ENCODE measurements at regions of chr2 and their contacts with region 1.

Region 1: DNA sequence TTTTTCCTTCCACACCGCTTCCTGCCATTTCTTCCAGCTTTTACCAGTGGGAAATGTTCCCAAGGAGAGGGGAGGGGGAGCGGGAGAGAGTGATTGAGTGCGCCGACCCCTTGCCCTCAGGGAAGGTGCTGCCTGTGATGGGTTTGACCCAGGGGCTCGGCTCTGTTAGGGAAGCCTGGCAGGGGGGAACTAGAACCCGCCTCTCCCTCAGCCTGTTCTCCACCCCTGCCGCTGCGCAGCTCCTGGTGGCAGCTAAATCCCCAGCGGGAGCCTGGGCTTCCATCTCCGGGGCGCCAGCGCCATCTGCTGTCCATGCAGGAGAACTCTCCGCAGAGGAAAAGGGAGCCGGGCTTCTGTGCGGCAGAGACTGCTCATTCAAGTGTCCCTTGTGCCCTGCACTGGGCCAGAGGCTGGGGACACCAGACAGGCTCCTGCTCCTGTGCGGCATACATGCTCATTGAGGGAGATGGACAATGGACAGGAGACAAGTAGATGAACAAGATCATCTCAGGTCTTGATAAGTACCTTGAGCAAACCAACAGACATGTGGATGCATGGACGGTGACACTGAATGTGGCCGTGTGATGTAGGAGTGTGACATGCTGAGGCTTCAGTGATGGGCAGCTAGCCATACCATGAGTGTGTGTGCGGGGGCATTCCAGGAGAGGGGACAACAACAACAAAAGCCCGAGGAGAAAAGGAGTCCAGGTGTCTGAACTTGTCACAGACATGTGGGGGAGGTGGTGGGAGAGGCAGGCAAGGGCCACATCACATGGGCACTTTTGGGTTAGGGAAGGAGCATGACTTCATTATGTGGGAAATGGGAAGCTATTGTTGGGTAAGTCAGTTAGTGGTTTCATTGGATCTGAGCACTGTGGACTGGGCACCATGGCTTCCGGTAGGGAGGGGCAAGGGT is 13.3 kb downstream of the CHPF start:
- DNase-seq: peak; percentile 86 to 96 (median 90)
- ATAC-seq: peak; percentile 77 to 83
- H3K4me3 ChIP-seq: no peak overlapping the region
- H3K27ac ChIP-seq: no peak overlapping the region
- H3K4me1 ChIP-seq: peaks cover 2% of the 10 kb centered on the region
- H3K27me3 ChIP-seq: no peaks in the 10 kb centered on the region

Region 2: GRCh38 chr2:219402665-219403515 is 127.4 kb before region 1 on chr2:
- intact Hi-C with region 1: loop called (anchors 2 to 5 kb)
- DNase-seq: peak; percentile 69 to 80 (median 70)
- ATAC-seq: peak; percentile 36 to 58
- H3K4me3 ChIP-seq: no peak overlapping the region
- H3K27ac ChIP-seq: no peak overlapping the region
- H3K4me1 ChIP-seq: peaks cover 3% of the 10 kb centered on the region
- H3K27me3 ChIP-seq: no peaks in the 10 kb centered on the region

Region 3: DNA sequence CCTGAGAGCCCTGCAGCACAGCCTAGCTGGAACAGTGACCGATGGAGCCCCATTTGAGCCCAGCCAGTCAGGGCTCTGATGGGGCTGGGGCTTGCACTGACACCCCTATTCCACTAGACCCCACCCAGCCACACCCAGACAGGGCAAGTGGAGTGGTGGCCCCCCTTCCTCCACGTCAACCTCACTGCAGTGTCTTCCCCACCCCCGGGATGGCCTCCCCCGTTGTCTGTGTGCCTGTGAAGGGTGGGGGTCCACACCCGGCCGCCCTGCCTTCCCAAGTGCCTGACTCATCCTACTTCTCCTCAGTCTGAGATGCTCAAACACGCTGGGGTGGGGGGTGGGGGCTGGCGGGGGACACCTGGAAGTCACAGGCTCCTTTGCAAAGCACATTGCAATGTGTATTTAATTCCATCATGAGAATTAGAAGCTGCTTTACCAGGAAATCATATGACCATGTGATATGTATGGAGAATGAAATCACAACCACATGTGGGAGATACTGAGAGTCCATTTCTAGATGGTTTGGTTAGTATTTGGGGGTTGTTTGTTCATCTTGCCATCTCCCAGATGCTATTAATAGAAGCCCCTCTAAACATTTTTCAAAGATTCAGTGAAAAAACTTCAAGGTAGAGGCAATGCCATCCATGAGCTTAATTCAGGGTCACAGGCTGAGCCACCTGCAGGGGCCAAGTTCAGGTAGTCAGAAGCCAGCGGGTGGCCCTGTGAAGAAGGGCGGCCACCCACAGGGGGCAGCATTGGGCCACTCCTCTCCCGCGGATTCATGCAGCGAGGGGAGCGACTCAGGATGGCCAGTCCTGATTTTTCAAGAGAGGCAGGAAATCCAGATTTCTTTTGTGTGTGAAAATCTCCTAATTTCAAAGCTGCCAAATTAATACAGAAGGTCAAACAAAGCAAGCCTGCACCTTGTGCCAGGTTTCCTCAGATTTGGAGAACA is 54.3 kb before region 1 on chr2:
- intact Hi-C with region 1: loop called in 3 of 4 experiments (anchors 2 to 10 kb)
- DNase-seq: peak; percentile 72 to 91 (median 88)
- ATAC-seq: peak; percentile 44 to 57
- H3K4me3 ChIP-seq: no peak overlapping the region
- H3K27ac ChIP-seq: no peak overlapping the region
- H3K4me1 ChIP-seq: peaks cover under 1% of the 10 kb centered on the region
- H3K27me3 ChIP-seq: no peaks in the 10 kb centered on the region

Region 4: DNA sequence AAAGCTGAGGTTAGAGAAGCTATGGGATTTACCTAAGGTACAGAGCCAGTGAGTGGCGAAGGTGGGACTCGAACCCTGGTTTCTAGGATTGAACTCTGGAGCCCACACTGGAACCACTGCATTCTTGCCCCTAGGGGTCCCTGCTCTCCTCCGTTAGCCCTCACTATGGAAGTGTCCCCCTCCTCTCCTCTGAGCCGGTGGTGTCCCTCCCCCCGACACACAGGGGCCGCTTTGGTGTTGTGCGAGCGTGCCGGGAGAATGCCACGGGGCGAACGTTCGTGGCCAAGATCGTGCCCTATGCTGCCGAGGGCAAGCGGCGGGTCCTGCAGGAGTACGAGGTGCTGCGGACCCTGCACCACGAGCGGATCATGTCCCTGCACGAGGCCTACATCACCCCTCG is 40.1 kb before region 1 on chr2:
- intact Hi-C with region 1: loop called in 2 of 4 experiments (anchors 5 kb)
- DNase-seq: peak in 1 of 3 donors; percentile 58
- ATAC-seq: no peak
- H3K4me3 ChIP-seq: no peak overlapping the region
- H3K27ac ChIP-seq: no peak overlapping the region
- H3K4me1 ChIP-seq: no peaks in the 10 kb centered on the region
- H3K27me3 ChIP-seq: no peaks in the 10 kb centered on the region